ENCODE measurements at regions of chrX and their contacts with region 1.

Region 1: DNA sequence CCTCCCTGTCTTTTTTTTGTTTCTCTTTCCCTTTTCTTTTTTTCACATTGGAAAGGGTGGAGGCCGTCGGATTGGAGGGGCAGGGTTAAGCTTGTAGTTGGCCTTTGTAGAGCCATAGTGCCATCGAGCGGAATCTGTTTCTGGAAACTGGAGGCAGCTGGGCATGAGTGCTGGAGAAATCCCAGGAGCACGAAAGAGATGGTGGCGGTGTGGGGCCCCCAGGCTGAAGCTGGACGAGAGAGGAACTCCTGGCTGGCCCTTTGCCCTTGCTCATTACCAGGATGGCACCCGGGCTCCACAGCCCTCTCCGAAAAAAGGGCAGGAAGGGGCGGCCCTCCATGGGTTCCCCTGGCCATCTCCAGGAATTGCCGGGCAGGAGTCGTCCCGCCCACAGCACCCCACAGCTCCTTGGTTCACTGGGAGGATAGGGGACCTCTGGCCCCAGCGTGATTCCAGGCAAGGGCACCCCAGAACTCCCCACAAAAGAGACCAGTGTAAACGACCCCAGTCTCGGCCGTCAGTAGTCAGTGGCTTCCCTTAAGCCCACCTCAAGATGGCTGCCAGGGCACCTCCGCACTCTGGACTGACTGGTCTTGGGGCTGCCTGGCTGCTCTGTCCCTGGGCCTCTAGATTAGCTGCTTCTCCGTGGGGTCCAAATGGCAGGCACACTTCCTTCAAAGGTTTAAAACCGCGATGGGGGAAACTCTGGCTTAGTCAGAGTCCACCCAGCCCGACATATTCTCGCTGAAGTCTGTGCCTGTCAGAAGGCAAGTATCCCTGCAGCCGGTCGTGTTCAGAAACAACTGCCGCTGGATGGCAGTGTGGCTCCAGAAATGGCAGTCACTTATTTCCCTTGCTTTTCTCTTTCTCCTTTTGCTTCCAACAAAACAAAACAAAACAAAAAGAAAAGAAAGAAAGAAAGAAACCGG is 74.1 kb downstream of the NBDY start:
- DNase-seq: peak; percentile 38 to 61
- ATAC-seq: peak; percentile 78 to 84
- H3K4me3 ChIP-seq: peak overlapping the region; percentile 52 to 76 (median 63)
- H3K27ac ChIP-seq: peak overlapping the region; percentile 81 to 85 (median 84)
- H3K4me1 ChIP-seq: peaks cover 5 to 24% of the 10 kb centered on the region in 2 donors
- H3K27me3 ChIP-seq: no peaks in the 10 kb centered on the region
- CTCF ChIP-seq: peak; percentile 42 to 77 (median 67)
- POLR2A ChIP-seq: no peak

Region 2: GRCh38 chrX:56947695-56948094 is 144.5 kb after region 1 on chrX:
- in situ Hi-C with region 1: no loop called
- intact Hi-C with region 1: loop called (anchors 10 kb)
- DNase-seq: peak; percentile 2 to 15
- ATAC-seq: peak in 1 of 2 donors; percentile 74
- H3K4me3 ChIP-seq: no peak overlapping the region
- H3K27ac ChIP-seq: peak overlapping the region; percentile 38 to 77 (median 64)
- H3K4me1 ChIP-seq: peaks cover 2 to 13% of the 10 kb centered on the region in 2 donors
- H3K27me3 ChIP-seq: peaks cover 0 to 4% (median 0%) of the 10 kb centered on the region in 3 donors
- CTCF ChIP-seq: no peak
- POLR2A ChIP-seq: no peak

Region 3: GRCh38 chrX:56978172-56978571 is 175.0 kb after region 1 on chrX:
- in situ Hi-C with region 1: loop called in 3 of 4 experiments (anchors 25 kb)
- intact Hi-C with region 1: loop called (anchors 1 kb)
- DNase-seq: peak; percentile 5 to 15
- ATAC-seq: peak; percentile 60 to 62
- H3K4me3 ChIP-seq: no peak overlapping the region
- H3K27ac ChIP-seq: no peak overlapping the region
- H3K4me1 ChIP-seq: no peaks in the 10 kb centered on the region
- H3K27me3 ChIP-seq: no peaks in the 10 kb centered on the region
- CTCF ChIP-seq: peak in 4 of 5 experiments; percentile 51 to 69 (median 54)
- POLR2A ChIP-seq: no peak

Region 4: GRCh38 chrX:57121162-57121741 is 318.1 kb after region 1 on chrX and contains the start of gene SPIN2B:
- in situ Hi-C with region 1: no loop called
- intact Hi-C with region 1: loop called (anchors 5 kb)
- DNase-seq: peak; percentile 54 to 68
- ATAC-seq: peak; percentile 97 to 98
- H3K4me3 ChIP-seq: peak within 1 kb of the TSS; percentile 63 to 71 (median 71)
- H3K27ac ChIP-seq: peak within 1 kb of the TSS; percentile 80 to 86 (median 85)
- H3K4me1 ChIP-seq: peaks cover 0 to 3% of the 10 kb centered on the region in 2 donors
- H3K27me3 ChIP-seq: no peaks in the 10 kb centered on the region
- CTCF ChIP-seq: peak in 1 of 5 experiments; percentile 24
- POLR2A ChIP-seq: peak; percentile 36 to 41
- total RNA-seq, gene SPIN2B: 3.2 to 9.0 (median 5.6) TPM

Region 5: DNA sequence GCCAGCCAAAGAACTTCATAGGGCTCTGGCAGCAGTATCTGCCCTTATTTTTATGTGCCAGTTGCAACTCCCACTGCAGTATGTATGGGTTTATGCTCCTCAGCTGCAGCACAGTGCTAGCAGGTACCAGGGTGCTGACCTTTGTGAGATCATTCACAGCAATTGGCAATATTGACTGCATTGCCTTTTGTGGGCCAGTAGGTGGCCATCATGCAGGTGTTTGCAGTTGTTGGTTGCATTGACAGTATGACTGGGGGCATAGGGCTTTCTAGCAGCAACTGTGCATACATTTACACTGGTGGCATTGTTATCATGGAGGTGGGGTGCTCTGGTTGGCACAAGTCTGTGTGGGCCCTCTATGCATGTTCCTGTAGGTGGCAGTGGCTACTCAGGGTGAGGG is 525.8 kb after region 1 on chrX:
- in situ Hi-C with region 1: no loop called
- intact Hi-C with region 1: no loop called
- DNase-seq: no peak
- ATAC-seq: no peak
- H3K4me3 ChIP-seq: no peak overlapping the region
- H3K27ac ChIP-seq: no peak overlapping the region
- H3K4me1 ChIP-seq: no peaks in the 10 kb centered on the region
- H3K27me3 ChIP-seq: no peaks in the 10 kb centered on the region
- CTCF ChIP-seq: no peak
- POLR2A ChIP-seq: no peak

Region 6: GRCh38 chrX:57595381-57595811 is 792.2 kb after region 1 on chrX:
- in situ Hi-C with region 1: loop called in 1 of 4 experiments (anchors 25 kb)
- intact Hi-C with region 1: loop called (anchors 5 kb)
- DNase-seq: no peak
- ATAC-seq: no peak
- H3K4me3 ChIP-seq: peak overlapping the region; percentile 13 to 38 (median 20)
- H3K27ac ChIP-seq: peak overlapping the region; percentile 23 to 64 (median 50)
- H3K4me1 ChIP-seq: peaks cover 20 to 36% of the 10 kb centered on the region in 2 donors
- H3K27me3 ChIP-seq: no peaks in the 10 kb centered on the region
- CTCF ChIP-seq: no peak
- POLR2A ChIP-seq: no peak

Region 7: DNA sequence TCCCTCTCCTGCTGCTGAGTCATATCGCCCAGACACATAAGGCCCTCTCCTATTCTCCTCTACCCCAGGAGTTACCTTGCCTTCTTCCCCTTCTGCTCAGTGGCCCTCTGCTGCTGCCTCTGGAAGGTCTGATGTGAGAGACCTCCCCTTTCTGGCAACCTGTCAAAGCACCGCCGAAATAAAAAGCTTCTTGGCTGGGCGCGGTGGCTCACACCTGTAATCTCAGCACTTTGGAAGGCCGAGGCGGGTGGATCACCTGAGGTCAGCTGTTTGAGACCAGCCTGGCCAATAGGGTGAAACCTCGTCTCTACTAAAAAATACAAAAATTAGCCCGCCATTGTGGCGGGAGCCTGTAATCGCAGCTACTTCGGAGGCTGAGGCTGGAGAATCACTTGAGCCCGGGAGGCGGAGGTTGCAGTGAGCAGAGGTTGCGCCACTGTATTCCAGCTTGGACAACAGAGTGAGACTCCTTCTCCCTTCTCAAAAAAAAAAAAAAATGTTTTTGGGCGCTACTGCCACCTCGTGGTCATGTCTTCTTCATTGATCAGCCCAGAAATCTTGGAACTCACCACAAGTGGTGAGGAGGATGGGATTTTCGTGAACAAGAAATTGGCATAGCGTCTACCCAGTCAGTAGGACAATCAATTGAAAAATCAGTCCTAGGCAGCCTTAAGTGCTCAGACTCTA is 1115.7 kb after region 1 on chrX:
- in situ Hi-C with region 1: loop called in 2 of 4 experiments (anchors 25 kb)
- intact Hi-C with region 1: loop called (anchors 10 kb)
- DNase-seq: no peak
- ATAC-seq: peak in 1 of 2 donors; percentile 61
- H3K4me3 ChIP-seq: no peak overlapping the region
- H3K27ac ChIP-seq: no peak overlapping the region
- H3K4me1 ChIP-seq: peaks cover 0 to 4% of the 10 kb centered on the region in 2 donors
- H3K27me3 ChIP-seq: no peaks in the 10 kb centered on the region
- CTCF ChIP-seq: peak in 3 of 5 experiments; percentile 35 to 59 (median 36)
- POLR2A ChIP-seq: no peak

Region 8: GRCh38 chrX:57929373-57929772 is 1126.2 kb after region 1 on chrX:
- in situ Hi-C with region 1: loop called in 2 of 4 experiments (anchors 25 kb)
- intact Hi-C with region 1: loop called (anchors 10 kb)
- DNase-seq: no peak
- ATAC-seq: peak in 1 of 2 donors; percentile 60
- H3K4me3 ChIP-seq: no peak overlapping the region
- H3K27ac ChIP-seq: no peak overlapping the region
- H3K4me1 ChIP-seq: peaks cover 0 to 8% of the 10 kb centered on the region in 2 donors
- H3K27me3 ChIP-seq: no peaks in the 10 kb centered on the region
- CTCF ChIP-seq: peak; percentile 9 to 59 (median 36)
- POLR2A ChIP-seq: no peak